ENCODE measurements at regions of chr3 and their contacts with region 1.

Region 1: GRCh38 chr3:168847291-168847883 is 751.7 kb upstream of the GOLIM4 start:
- H3K4me3 Mint-ChIP-seq: no peak overlapping the region
- H3K27ac Mint-ChIP-seq: no peak overlapping the region
- H3K4me1 Mint-ChIP-seq: no peaks in the 10 kb centered on the region
- H3K27me3 Mint-ChIP-seq: no peaks in the 10 kb centered on the region

Region 2: GRCh38 chr3:168047190-168047795 is 800.1 kb before region 1 on chr3:
- intact Hi-C with region 1: loop called (anchors 10 kb)
- H3K4me3 Mint-ChIP-seq: no peak overlapping the region
- H3K27ac Mint-ChIP-seq: no peak overlapping the region
- H3K4me1 Mint-ChIP-seq: peaks cover 23% of the 10 kb centered on the region
- H3K27me3 Mint-ChIP-seq: no peaks in the 10 kb centered on the region

Region 3: DNA sequence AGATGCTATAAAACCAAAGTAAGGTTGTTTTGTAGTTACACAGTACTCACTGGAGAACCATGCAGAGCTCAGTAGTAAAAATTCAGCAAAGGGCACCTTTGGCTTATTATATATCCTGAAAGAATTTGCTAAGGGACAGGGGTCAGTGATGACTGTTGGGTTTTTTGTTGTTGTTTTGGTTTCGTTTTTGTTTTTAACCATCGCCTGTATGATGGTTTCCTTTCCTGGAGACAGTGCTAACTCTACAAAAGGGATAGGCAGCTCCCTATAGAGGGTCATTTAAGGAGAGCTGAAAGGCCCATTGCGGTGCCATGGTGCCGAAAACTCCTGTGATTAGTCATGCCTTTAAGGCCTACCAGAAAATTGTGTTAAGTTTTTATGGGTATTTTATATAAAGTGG is 633.5 kb before region 1 on chr3:
- intact Hi-C with region 1: loop called (anchors 1 kb)
- H3K4me3 Mint-ChIP-seq: no peak overlapping the region
- H3K27ac Mint-ChIP-seq: no peak overlapping the region
- H3K4me1 Mint-ChIP-seq: peaks cover 5% of the 10 kb centered on the region
- H3K27me3 Mint-ChIP-seq: no peaks in the 10 kb centered on the region

Region 4: DNA sequence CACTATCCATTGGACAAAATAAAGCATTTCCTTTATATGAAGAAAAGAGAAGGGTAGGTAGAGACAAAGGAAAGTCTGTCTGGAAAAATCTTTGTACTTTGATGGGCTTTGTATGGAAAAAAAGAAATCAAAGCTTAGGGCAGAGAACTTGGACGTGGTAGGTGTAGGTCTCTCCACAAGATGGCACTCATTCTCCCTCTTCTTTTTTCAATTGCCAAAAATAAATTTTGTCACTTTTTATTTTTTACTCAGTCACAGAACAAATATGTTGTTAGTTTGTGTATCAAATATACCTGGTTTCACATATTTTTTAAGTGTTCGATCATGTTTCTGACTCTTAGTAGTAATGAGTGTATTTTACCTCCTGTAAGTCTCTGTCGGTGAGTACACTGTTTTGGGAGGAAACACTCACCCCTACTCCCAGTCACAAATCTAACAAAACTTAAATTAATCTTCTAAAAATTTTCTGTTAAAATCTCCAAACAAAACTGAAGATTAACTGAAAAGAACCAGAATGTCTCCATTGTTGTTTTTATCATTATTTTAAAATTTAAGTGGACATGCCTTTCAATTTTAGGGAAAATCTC is 335.9 kb before region 1 on chr3:
- intact Hi-C with region 1: loop called (anchors 5 kb)
- H3K4me3 Mint-ChIP-seq: no peak overlapping the region
- H3K27ac Mint-ChIP-seq: no peak overlapping the region
- H3K4me1 Mint-ChIP-seq: no peaks in the 10 kb centered on the region
- H3K27me3 Mint-ChIP-seq: no peaks in the 10 kb centered on the region

Region 5: DNA sequence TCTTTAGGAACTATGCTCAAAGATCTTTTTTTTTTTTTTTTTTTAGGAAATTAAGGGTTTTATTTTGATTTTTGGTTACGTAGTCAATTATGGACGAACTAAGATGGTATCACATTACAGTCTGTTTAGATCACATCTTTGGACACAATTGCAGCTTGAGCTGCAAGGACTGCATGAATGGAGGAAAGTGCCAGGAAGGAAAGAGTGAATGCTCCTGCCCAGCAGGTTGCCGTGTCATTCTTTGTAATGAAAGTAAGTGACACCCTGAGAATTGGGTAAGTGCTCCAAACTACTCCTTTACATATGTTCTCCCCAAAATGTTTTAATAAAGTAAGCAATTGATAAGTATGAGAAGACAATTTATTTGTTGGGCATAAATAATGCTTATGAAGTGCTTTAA is 35.2 kb before region 1 on chr3:
- intact Hi-C with region 1: no loop called
- H3K4me3 Mint-ChIP-seq: no peak overlapping the region
- H3K27ac Mint-ChIP-seq: no peak overlapping the region
- H3K4me1 Mint-ChIP-seq: no peaks in the 10 kb centered on the region
- H3K27me3 Mint-ChIP-seq: no peaks in the 10 kb centered on the region

Region 6: GRCh38 chr3:169954142-169954756 is 1106.9 kb after region 1 on chr3:
- intact Hi-C with region 1: no loop called
- H3K4me3 Mint-ChIP-seq: no peak overlapping the region
- H3K27ac Mint-ChIP-seq: peak overlapping the region; percentile 63
- H3K4me1 Mint-ChIP-seq: peaks cover 25% of the 10 kb centered on the region
- H3K27me3 Mint-ChIP-seq: no peaks in the 10 kb centered on the region

Measured in dendritic cell treated with granulocyte-macrophage colony-stimulating factor and Interleukin-4, amounts not matched to agents 40 ng/mL and 50 ng/mL, for 4 days (primary cell).